Activated naive CD4-positive, alpha-beta T cell treated with anti-CD3 and anti-CD28 coated beads for 36 hours (primary cell): ENCODE measurements at regions of chr16 and their contacts with region 1.

Region 1: DNA sequence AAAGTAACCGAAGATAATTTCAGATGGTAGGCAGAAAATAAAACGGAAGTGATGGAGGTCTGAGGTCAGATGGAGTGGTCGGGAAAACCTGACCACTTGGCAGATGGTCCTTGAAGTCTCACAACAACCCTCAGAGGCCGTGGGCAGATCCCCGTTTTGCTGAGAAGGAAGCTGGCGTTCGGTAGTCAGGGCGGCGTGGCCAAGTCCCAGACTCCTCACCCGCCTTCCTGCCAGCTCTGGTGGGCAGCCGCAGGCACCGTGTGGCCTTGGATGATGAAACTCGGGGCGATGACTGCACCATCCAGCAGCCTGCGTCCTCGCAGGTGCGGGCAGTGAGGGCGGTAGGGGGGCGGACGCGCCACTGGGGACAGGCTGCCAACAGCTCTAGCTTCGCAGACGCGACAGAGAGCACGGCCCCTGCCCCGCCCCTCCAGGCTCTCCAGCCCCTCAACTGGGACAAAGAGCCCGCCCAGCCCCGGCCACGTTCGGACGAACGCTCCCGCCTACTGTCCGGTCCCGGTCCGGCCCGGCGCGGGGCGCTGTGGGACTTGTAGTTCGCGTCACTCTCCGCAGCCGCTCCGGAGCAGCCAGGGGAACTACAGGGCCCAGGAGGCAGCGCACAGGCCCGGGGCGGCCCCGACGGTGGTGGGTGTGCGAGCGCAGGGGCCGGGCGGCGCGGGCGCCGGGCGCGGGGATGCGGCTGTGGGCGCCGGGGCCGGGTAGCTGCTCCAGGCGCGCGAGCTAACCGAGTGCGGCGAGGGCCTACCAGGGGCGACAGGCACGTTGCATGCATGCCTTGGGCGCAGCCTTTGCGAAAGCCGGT is at the start of gene GPT2:
- DNase-seq: peak; percentile 80
- H3K4me3 Mint-ChIP-seq: peak within 1 kb of the TSS; percentile 78
- H3K27ac Mint-ChIP-seq: peak within 1 kb of the TSS; percentile 68
- H3K4me1 Mint-ChIP-seq: peaks cover 9% of the 10 kb centered on the region
- H3K27me3 Mint-ChIP-seq: peaks cover 19% of the 10 kb centered on the region
- total RNA-seq, gene GPT2: 15.5 to 18.6 TPM

Region 2: DNA sequence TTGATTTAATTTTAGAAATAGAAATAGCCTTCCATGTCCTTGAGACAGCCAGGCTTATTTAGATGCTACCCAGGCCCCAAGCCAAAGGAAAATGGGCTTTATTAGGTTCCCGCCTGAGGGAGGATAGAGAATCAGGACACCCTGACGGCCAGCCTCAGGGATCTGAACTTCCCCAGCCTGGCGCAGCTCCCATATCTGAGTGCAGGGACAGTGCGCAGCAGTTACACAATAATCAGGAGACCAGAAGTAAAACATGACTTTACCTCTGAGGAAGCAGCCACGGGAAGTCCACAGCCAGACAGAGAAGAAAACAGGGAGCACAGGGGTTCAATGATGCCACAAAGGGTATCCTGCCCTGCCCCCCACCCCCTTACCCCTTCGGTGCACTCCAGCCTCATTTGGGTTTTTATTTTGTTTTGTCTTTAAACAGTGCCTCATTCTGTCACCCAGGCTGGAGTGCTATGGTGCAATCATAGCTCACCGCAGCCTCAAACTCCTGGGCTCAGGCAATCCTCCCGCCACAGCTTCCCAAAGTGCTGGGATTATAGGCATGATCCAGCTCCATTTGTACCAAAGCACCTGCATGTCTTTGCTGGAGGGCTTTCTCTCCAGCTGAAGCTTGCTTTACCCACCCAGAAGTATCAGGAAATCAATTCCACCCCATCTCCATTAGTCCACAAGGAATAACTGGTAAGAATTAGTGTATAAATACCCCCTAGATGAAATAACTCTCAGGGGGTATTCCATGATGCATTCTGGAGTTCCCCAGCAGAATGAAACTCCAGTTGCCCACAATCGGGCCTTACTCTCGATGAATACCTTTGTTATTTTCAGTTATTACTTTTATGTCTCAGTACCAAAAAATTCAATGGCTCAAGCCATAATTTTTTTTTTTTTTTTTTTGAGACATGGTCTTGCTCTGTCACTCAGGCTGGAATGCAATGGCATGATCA is 172.5 kb before region 1 on chr16:
- CTCF ChIA-PET with region 1: no interaction called
- intact Hi-C with region 1: no loop called
- DNase-seq: no peak
- H3K4me3 Mint-ChIP-seq: no peak overlapping the region
- H3K27ac Mint-ChIP-seq: no peak overlapping the region
- H3K4me1 Mint-ChIP-seq: no peaks in the 10 kb centered on the region
- H3K27me3 Mint-ChIP-seq: no peaks in the 10 kb centered on the region

Region 3: DNA sequence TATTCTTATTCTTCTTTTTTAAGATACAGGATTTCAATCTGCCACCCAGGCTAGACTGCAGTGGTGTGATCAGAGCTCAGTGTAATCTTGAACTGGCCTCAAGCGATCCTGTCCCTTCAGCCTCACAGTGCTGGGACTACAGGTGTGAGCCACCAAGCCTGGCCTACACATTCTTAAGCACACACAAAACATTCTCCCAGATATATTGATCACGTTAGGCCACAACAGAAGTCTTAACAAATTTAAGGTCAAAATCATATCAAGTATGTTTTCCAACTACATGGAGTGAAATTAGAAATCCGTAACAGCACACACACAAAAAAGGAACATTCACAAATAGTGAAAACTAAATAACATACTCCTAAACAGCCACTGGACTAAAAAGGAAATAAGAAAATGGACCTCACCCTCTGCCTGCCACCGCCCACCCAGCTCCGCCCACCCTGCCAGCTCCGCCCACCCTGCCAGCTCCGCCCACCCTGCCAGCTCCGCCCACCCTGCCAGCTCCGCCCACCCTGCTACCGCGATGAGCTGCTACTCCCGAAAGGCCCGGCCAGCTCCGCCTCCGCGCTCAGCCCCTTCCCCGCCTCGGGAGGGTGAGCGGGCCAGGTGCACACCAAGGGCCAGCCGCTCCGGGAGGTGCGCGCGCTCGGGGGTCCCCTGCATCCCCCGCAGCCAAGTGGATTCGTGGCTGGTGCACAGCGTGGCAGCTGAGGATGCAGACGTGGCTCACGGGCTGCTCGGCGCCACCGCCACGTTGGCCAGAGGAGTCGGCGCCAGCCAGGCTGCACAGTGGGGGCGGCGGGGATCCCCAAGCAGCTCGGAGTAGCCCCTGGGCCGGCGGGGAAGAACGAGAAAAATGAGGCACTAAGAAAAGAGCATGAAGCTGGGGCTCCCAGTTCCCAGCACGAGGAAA is 94.1 kb before region 1 on chr16:
- CTCF ChIA-PET with region 1: no interaction called
- intact Hi-C with region 1: loop called (anchors 5 kb)
- DNase-seq: peak; percentile 85
- H3K4me3 Mint-ChIP-seq: peak overlapping the region; percentile 74
- H3K27ac Mint-ChIP-seq: no peak overlapping the region
- H3K4me1 Mint-ChIP-seq: peaks cover 23% of the 10 kb centered on the region
- H3K27me3 Mint-ChIP-seq: no peaks in the 10 kb centered on the region